Activated CD4-positive, alpha-beta memory T cell treated with anti-CD3 and anti-CD28 coated beads, Interleukin-2, amount 10 ng/mL, durations not matched to agents 7 days and 5 days (primary cell): ENCODE measurements at regions of chr10 and their contacts with region 1.

Region 1: DNA sequence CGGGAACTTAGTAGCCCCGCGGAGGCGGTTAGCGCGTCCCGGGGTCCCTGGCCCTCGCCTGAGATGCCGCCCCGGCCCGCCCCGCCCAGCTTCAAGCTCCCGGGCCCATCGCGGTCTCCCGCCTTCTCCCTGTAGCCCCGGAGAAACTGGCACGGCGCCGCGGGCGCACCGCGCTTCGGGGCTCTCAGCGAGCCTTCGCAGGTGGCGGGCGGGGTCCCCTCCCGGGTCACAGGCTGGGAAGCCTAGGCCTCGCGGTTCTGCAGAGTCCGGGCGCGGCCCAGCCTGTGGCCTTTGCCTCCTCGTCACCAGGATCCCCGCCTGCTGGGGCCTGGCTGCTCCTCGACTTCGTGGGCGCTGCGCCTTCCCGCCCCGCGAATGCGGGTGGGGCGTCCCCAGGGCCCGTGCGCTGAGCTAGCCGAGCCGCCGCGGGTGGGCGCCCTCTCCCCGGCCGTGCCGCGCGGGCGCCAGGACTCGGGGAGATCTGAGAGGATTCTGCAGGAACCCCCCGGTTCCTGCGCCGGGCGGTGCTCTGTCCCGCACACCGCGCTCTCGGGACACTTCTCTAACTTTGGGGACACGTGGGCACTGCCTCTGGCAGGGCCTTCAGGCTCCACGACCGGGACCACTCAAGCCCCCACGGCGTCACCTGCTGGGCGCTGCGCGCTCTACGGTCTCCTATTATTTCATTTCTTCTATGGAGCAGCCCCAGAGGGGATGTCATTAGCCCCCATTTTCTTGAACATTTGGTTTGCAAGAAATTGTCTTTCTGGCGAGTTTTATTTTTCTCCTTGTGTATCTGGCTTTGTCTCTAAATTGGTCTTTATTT is 682 bp upstream of the RGS10 start:
- DNase-seq: peak; percentile 70
- H3K4me3 Mint-ChIP-seq: peak overlapping the region; percentile 78
- H3K27ac Mint-ChIP-seq: peak overlapping the region; percentile 80
- H3K4me1 Mint-ChIP-seq: peaks cover 45% of the 10 kb centered on the region
- H3K27me3 Mint-ChIP-seq: peaks cover 25% of the 10 kb centered on the region

Region 2: DNA sequence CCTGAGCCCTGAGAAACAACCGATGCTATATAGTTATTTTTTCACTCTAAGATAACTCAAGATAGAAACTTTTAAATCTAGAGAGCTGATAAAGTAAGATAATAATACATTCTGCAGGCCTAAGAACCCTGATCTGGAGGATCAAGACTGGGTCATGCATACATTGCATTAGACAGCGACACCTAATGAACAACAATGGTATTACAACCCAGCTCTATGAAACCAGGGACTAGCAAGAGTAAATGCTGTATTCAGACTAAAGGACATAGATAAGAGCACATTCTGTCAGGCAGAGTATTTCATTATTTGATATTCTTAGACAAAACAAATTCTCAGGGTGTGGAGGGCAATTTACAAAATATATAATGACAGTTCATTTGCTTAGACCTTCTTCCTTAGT is 187.3 kb before region 1 on chr10:
- CTCF ChIA-PET with region 1: no interaction called
- POLR2A ChIA-PET with region 1: no interaction called
- DNase-seq: no peak
- H3K4me3 Mint-ChIP-seq: no peak overlapping the region
- H3K27ac Mint-ChIP-seq: no peak overlapping the region
- H3K4me1 Mint-ChIP-seq: peaks cover 16% of the 10 kb centered on the region
- H3K27me3 Mint-ChIP-seq: no peaks in the 10 kb centered on the region

Region 3: DNA sequence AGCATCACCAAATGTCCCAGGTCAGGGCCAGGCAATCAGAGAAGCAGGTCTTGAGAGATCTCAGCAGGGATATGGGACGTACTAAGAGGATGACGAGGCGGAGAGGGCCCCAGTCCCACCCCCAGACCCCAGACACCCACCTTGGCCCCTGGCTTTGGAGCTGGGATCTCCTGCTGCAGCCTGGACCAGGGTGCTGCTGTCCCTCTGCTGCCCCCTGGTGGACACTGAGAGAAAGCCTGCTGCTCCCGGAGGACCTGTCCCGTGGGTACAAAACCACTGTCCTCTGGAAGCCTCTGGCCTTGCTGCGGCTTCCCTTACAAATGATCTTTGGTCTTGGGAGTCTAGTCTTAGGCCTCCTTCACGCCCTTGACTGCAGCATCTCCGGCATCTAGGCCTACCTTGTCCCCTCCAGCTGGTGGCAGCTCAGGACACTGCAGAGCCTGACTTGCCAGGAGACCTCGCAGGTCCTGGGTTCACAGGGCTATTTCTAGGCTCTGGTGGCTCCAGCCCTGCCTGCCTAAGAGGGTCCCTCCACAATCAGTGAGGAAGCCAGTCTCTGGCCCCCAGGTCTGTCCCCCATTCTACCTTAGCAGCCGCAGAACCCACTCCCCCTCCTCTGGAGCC is 97.8 kb before region 1 on chr10:
- CTCF ChIA-PET with region 1: interaction called, 17 read pairs
- POLR2A ChIA-PET with region 1: interaction called, 5 read pairs
- DNase-seq: peak; percentile 85
- H3K4me3 Mint-ChIP-seq: no peak overlapping the region
- H3K27ac Mint-ChIP-seq: no peak overlapping the region
- H3K4me1 Mint-ChIP-seq: peaks cover 15% of the 10 kb centered on the region
- H3K27me3 Mint-ChIP-seq: no peaks in the 10 kb centered on the region

Region 4: GRCh38 chr10:119517235-119518141 is 25.7 kb before region 1 on chr10:
- CTCF ChIA-PET with region 1: interaction called, 35 read pairs
- POLR2A ChIA-PET with region 1: interaction called, 43 read pairs
- DNase-seq: peak; percentile 75
- H3K4me3 Mint-ChIP-seq: peak overlapping the region; percentile 60
- H3K27ac Mint-ChIP-seq: peak overlapping the region; percentile 94
- H3K4me1 Mint-ChIP-seq: peaks cover 42% of the 10 kb centered on the region
- H3K27me3 Mint-ChIP-seq: no peaks in the 10 kb centered on the region

Region 5: GRCh38 chr10:119596537-119597404 is 53.6 kb after region 1 on chr10 and contains the start of gene TIAL1:
- CTCF ChIA-PET with region 1: interaction called, 5 read pairs
- POLR2A ChIA-PET with region 1: interaction called, 19 read pairs
- DNase-seq: peak; percentile 96
- H3K4me3 Mint-ChIP-seq: peak within 1 kb of the TSS; percentile 92
- H3K27ac Mint-ChIP-seq: peak within 1 kb of the TSS; percentile 97
- H3K4me1 Mint-ChIP-seq: peaks cover 45% of the 10 kb centered on the region
- H3K27me3 Mint-ChIP-seq: no peaks in the 10 kb centered on the region
- total RNA-seq, gene TIAL1: 168 to 170 TPM